ENCODE measurements at regions of chr11 and their contacts with region 1.

Region 1: DNA sequence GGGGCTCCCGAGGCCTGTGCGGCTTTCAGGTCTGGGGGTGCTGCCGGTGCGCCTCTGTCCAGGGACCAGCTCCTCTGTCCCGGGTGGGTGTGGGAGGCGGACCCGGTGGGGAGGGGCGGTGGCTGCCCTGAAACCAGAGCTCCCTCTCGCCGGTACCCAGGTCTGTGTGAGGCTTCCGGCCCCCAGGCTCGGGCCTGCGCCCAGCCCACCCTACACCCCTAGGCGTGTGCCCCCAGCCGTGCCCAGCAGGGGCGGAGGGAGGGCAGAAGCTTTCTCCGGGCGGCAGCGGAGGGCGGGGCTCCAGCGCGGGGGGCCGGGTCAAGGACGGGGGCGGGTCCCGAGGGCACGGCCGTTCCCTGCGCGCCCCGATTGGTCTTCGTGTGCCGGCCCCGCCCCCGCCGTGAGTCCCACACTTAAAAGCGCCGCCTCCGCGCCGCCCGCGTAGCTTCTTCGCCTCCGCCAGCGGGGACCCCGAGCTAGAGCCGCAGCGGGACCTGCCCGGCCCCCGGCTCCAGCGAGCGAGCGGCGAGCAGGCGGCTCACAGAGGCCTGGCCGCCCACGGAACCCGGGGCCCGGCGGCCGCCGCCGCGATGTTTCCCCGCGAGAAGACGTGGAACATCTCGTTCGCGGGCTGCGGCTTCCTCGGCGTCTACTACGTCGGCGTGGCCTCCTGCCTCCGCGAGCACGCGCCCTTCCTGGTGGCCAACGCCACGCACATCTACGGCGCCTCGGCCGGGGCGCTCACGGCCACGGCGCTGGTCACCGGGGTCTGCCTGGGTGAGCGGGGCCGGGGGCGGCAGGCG is 616 bp downstream of the PNPLA2 start:
- DNase-seq: peak; percentile 83 to 96 (median 92)
- ATAC-seq: peak; percentile 71
- H3K4me3 ChIP-seq: peak overlapping the region; percentile 74
- H3K4me3 Mint-ChIP-seq: peak overlapping the region; percentile 97
- H3K27ac ChIP-seq: peak overlapping the region; percentile 62 to 88
- H3K27ac Mint-ChIP-seq: peak overlapping the region; percentile 92
- H3K4me1 ChIP-seq: peaks cover 34% of the 10 kb centered on the region
- H3K4me1 Mint-ChIP-seq: peaks cover 11% of the 10 kb centered on the region
- H3K27me3 ChIP-seq: no peaks in the 10 kb centered on the region
- H3K27me3 Mint-ChIP-seq: no peaks in the 10 kb centered on the region
- CTCF ChIP-seq: peak; percentile 21

Region 2: DNA sequence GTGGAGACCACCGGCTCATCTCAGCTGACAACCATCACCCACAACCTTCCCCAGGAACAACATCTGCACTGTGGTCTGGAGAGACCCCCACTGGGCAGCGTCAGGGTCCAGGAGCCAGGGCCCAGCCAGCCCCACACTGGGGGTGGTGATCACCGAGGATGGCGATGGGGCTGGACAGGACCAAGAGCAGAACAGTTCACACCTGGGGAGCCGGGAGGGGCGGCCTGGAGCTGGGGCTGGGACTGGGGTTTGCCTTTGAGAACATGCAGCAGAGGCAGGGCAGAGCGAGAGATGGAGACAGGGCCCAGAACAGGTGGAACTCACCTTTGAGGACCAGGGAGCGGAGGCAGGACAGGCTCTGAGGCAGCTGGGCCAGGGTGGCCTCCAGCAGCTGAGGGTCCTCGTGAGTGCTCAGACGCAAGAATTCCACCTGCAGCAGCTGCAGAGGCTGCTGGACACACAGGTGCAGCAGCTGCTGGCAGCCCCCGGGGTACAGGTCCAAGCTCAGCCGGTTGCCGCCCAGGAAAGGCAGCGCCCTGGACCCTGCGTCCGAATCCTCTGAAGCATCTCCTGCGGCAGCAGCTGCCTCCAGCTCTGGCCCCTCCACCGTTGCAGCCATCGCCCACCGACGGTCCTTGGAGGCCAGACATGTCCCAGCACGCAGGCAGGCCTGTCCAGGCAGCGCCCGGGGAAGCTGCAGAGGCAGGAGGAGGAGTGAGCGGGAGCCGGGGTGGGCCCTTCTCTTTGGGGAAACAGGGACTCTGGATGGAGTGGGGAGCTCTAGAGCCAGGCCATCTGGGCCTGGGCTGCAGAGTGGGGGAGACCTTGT is 15.3 kb before region 1 on chr11:
- CTCF ChIA-PET with region 1: no interaction called
- POLR2A ChIA-PET with region 1: interaction called, 101 read pairs
- intact Hi-C with region 1: loop called (anchors 1 kb)
- DNase-seq: no peak
- ATAC-seq: no peak
- H3K4me3 ChIP-seq: peak overlapping the region; percentile 79
- H3K4me3 Mint-ChIP-seq: peak overlapping the region; percentile 81
- H3K27ac ChIP-seq: peak overlapping the region; percentile 57 to 81
- H3K27ac Mint-ChIP-seq: peak overlapping the region; percentile 47
- H3K4me1 ChIP-seq: peaks cover 44% of the 10 kb centered on the region
- H3K4me1 Mint-ChIP-seq: peaks cover 11% of the 10 kb centered on the region
- H3K27me3 ChIP-seq: no peaks in the 10 kb centered on the region
- H3K27me3 Mint-ChIP-seq: no peaks in the 10 kb centered on the region
- CTCF ChIP-seq: no peak

Region 3: DNA sequence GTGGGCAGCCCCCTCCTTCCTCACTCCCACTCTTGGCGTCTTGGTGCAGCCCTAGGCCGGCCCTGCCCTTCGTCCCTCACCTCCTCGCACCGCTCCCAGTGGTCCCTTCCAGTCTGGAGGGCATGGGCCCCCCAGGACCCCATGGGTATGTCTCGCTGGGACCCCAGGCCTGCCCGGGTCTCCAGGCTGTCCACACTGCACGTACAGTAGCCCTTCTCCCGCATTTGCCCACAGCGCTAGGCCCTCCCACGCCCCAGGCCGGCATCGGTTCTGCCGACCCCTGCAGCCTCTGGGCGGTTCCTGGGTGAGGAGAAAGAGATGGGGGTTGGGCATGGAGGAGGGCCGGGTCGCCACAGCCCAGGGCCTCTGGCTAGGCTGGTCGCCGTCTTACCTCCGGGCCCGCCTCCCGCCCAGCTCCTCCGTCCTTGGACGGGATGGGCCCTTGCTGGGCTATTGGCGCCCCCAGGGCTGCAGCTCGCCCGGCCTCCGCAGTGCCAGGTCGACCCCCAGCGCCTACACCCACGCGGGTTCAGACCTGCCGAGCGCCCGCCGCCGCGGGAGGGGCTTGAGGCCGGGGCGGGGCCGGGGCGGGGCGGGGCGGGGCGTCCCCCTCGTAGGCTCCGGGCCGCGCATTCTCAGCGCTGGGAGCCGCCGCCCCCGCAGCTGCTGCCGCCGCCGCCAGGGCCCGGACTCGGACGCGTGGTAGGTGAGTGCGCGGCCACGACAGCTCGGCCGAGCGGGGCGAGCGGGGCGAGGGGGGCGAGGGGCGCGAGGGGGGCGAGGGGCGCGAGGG is 13.2 kb after region 1 on chr11 and contains the start of gene CD151:
- CTCF ChIA-PET with region 1: no interaction called
- POLR2A ChIA-PET with region 1: interaction called, 115 read pairs
- intact Hi-C with region 1: loop called in 1 of 2 experiments (anchors 1 kb)
- DNase-seq: peak in 8 of 14 experiments; percentile 26 to 85 (median 52)
- ATAC-seq: peak; percentile 59
- H3K4me3 ChIP-seq: peak within 1 kb of the TSS; percentile 39
- H3K4me3 Mint-ChIP-seq: peak within 1 kb of the TSS; percentile 85
- H3K27ac ChIP-seq: no peak within 1 kb of the TSS
- H3K27ac Mint-ChIP-seq: no peak within 1 kb of the TSS
- H3K4me1 ChIP-seq: peaks cover 69% of the 10 kb centered on the region
- H3K4me1 Mint-ChIP-seq: peaks cover 33% of the 10 kb centered on the region
- H3K27me3 ChIP-seq: peaks cover 43 to 51% of the 10 kb centered on the region in 2 experiments
- H3K27me3 Mint-ChIP-seq: peaks cover 42% of the 10 kb centered on the region
- CTCF ChIP-seq: no peak
- total RNA-seq, gene CD151: 20.2 to 20.8 TPM

Region 4: GRCh38 chr11:1103401-1104325 is 284.3 kb after region 1 on chr11:
- CTCF ChIA-PET with region 1: no interaction called
- POLR2A ChIA-PET with region 1: no interaction called
- intact Hi-C with region 1: no loop called
- DNase-seq: no peak
- ATAC-seq: no peak
- H3K4me3 ChIP-seq: no peak overlapping the region
- H3K4me3 Mint-ChIP-seq: no peak overlapping the region
- H3K27ac ChIP-seq: no peak overlapping the region
- H3K27ac Mint-ChIP-seq: no peak overlapping the region
- H3K4me1 ChIP-seq: no peaks in the 10 kb centered on the region
- H3K4me1 Mint-ChIP-seq: no peaks in the 10 kb centered on the region
- H3K27me3 ChIP-seq: no peaks in the 10 kb centered on the region
- H3K27me3 Mint-ChIP-seq: no peaks in the 10 kb centered on the region
- CTCF ChIP-seq: no peak